HCT116 (cell line): ENCODE measurements at regions of chr2 and their contacts with region 1.

Region 1: GRCh38 chr2:25414781-25415180 is 73.1 kb upstream of the DNMT3A start:
- DNase-seq: no peak
- ATAC-seq: no peak
- H3K4me3 ChIP-seq: no peak overlapping the region
- H3K27ac ChIP-seq: no peak overlapping the region
- H3K4me1 ChIP-seq: no peaks in the 10 kb centered on the region
- H3K27me3 ChIP-seq: no peaks in the 10 kb centered on the region
- CTCF ChIP-seq: no peak
- POLR2A ChIP-seq: no peak
- RAD21 ChIP-seq: no peak

Region 2: DNA sequence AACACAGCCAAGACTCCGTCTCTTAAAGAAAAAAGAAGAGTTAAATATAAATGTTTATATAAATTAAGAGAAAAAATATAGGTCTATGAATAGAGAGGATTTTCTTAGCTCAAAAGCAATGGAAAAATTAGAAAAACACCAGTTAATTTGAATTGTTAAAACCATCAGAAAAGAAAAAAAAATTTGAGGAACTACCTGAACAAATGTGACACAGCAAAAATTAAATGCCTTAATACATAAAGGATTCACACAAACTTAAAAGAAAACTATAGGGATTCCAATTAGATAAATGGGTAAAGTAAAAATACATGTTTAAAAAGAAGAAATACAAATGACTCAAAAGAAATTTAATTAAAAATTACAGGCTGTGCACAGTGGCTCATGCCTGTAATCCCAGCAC is 74.8 kb after region 1 on chr2:
- CTCF ChIA-PET with region 1: no interaction called
- POLR2A ChIA-PET with region 1: no interaction called
- RAD21 ChIA-PET with region 1: no interaction called
- intact Hi-C with region 1: loop called (anchors 2 kb)
- DNase-seq: no peak
- ATAC-seq: no peak
- H3K4me3 ChIP-seq: no peak overlapping the region
- H3K27ac ChIP-seq: no peak overlapping the region
- H3K4me1 ChIP-seq: no peaks in the 10 kb centered on the region
- H3K27me3 ChIP-seq: no peaks in the 10 kb centered on the region
- CTCF ChIP-seq: no peak
- POLR2A ChIP-seq: no peak
- RAD21 ChIP-seq: no peak

Region 3: DNA sequence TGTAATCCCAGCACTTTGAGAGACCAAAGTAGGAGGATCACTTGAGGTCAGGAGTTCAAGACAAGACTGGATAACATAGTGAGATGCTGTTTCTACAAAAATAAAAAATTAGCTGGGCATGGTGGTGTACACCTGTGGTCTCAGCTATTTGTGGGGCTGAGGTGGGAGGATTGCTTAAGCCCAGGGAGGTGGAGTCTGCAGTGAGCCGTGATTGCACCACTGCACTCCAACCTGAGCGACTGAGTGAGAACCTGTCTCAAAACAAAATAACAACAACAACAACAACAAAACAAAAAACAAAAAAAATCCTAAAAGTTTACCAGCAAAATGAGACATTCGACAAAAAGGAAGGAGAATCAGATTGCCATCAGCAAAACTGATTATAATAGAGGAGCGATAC is 87.1 kb after region 1 on chr2:
- CTCF ChIA-PET with region 1: no interaction called
- POLR2A ChIA-PET with region 1: no interaction called
- RAD21 ChIA-PET with region 1: no interaction called
- intact Hi-C with region 1: no loop called
- DNase-seq: no peak
- ATAC-seq: no peak
- H3K4me3 ChIP-seq: no peak overlapping the region
- H3K27ac ChIP-seq: no peak overlapping the region
- H3K4me1 ChIP-seq: no peaks in the 10 kb centered on the region
- H3K27me3 ChIP-seq: no peaks in the 10 kb centered on the region
- CTCF ChIP-seq: no peak
- POLR2A ChIP-seq: no peak
- RAD21 ChIP-seq: no peak